CD4-positive, alpha-beta memory T cell (primary cell): ENCODE measurements at regions of chrX and their contacts with region 1.

Region 1: DNA sequence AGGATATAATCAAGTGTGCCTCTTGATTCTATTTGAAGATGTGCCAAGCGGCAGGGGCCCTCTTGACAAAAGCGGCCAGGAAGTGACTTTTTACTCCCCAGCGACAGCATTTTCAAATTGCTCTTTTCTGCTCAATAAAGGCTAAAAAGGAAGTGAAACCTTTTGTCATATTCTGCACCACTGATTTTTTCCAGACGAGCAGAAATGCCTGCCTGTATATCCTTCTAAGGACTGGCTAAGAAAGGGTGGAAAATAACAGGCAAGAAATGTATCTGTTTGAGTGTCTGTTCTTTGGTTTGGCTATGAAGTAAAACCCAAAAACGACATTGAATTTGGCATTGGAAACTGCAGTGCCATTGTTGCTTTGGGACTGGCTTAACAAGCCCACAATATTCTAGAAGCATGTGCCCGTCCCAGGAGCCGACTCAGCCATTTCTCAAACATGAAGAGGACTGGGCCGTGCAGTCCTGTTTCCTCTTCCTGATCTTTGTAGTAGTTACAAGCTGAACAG is 25.4 kb downstream of the TMSB4X start:
- DNase-seq: peak; percentile 55 to 68 (median 59)
- H3K4me3 ChIP-seq: no peak overlapping the region
- H3K4me3 Mint-ChIP-seq: peak overlapping the region; percentile 71 to 88 (median 78)
- H3K27ac ChIP-seq: peak overlapping the region; percentile 72
- H3K27ac Mint-ChIP-seq: peak overlapping the region; percentile 91 to 98 (median 94)
- H3K4me1 ChIP-seq: peaks cover 91% of the 10 kb centered on the region
- H3K4me1 Mint-ChIP-seq: peaks cover 45 to 84% (median 69%) of the 10 kb centered on the region in 4 donors
- H3K27me3 ChIP-seq: no peaks in the 10 kb centered on the region
- H3K27me3 Mint-ChIP-seq: no peaks in the 10 kb centered on the region

Region 2: GRCh38 chrX:12955882-12956703 is 44.3 kb before region 1 on chrX:
- CTCF ChIA-PET with region 1: interaction called, 8 read pairs
- POLR2A ChIA-PET with region 1: interaction called, 39 read pairs
- intact Hi-C with region 1: loop called (anchors 2 kb)
- DNase-seq: peak; percentile 52 to 84 (median 65)
- H3K4me3 ChIP-seq: peak overlapping the region; percentile 23 to 51
- H3K4me3 Mint-ChIP-seq: peak overlapping the region; percentile 80 to 92 (median 86)
- H3K27ac ChIP-seq: peak overlapping the region; percentile 88
- H3K27ac Mint-ChIP-seq: peak overlapping the region; percentile 94 to 99 (median 97)
- H3K4me1 ChIP-seq: peaks cover 96% of the 10 kb centered on the region
- H3K4me1 Mint-ChIP-seq: peaks cover 42 to 90% (median 73%) of the 10 kb centered on the region in 4 donors
- H3K27me3 ChIP-seq: no peaks in the 10 kb centered on the region
- H3K27me3 Mint-ChIP-seq: no peaks in the 10 kb centered on the region

Region 3: GRCh38 chrX:13013363-13014110 is 13.2 kb after region 1 on chrX:
- CTCF ChIA-PET with region 1: interaction called, 7 read pairs
- POLR2A ChIA-PET with region 1: interaction called, 65 read pairs
- intact Hi-C with region 1: loop called (anchors 1 kb)
- DNase-seq: peak in 2 of 5 donors; percentile 19 to 23
- H3K4me3 ChIP-seq: no peak overlapping the region
- H3K4me3 Mint-ChIP-seq: peak overlapping the region; percentile 6 to 44 (median 20)
- H3K27ac ChIP-seq: peak overlapping the region; percentile 61
- H3K27ac Mint-ChIP-seq: peak overlapping the region; percentile 56 to 93 (median 80)
- H3K4me1 ChIP-seq: peaks cover 56% of the 10 kb centered on the region
- H3K4me1 Mint-ChIP-seq: peaks cover 36 to 72% (median 53%) of the 10 kb centered on the region in 4 donors
- H3K27me3 ChIP-seq: no peaks in the 10 kb centered on the region
- H3K27me3 Mint-ChIP-seq: no peaks in the 10 kb centered on the region

Region 4: GRCh38 chrX:13036896-13037295 is 36.5 kb after region 1 on chrX:
- CTCF ChIA-PET with region 1: no interaction called
- POLR2A ChIA-PET with region 1: interaction called, 4 read pairs
- intact Hi-C with region 1: loop called (anchors 5 kb)
- DNase-seq: no peak
- H3K4me3 ChIP-seq: no peak overlapping the region
- H3K4me3 Mint-ChIP-seq: no peak overlapping the region
- H3K27ac ChIP-seq: no peak overlapping the region
- H3K27ac Mint-ChIP-seq: peak overlapping the region in 2 of 7 donors; percentile 11 to 59
- H3K4me1 ChIP-seq: no peaks in the 10 kb centered on the region
- H3K4me1 Mint-ChIP-seq: peaks cover under 1 to 20% (median 4%) of the 10 kb centered on the region in 4 donors
- H3K27me3 ChIP-seq: no peaks in the 10 kb centered on the region
- H3K27me3 Mint-ChIP-seq: no peaks in the 10 kb centered on the region

Region 5: GRCh38 chrX:13051529-13052172 is 51.3 kb after region 1 on chrX:
- CTCF ChIA-PET with region 1: interaction called, 4 read pairs
- POLR2A ChIA-PET with region 1: interaction called, 57 read pairs
- intact Hi-C with region 1: no loop called
- DNase-seq: peak; percentile 61 to 71 (median 70)
- H3K4me3 ChIP-seq: no peak overlapping the region
- H3K4me3 Mint-ChIP-seq: peak overlapping the region in 7 of 8 donors; percentile 10 to 80 (median 52)
- H3K27ac ChIP-seq: peak overlapping the region; percentile 42
- H3K27ac Mint-ChIP-seq: peak overlapping the region; percentile 85 to 97 (median 95)
- H3K4me1 ChIP-seq: peaks cover 88% of the 10 kb centered on the region
- H3K4me1 Mint-ChIP-seq: peaks cover 47 to 87% (median 65%) of the 10 kb centered on the region in 4 donors
- H3K27me3 ChIP-seq: no peaks in the 10 kb centered on the region
- H3K27me3 Mint-ChIP-seq: no peaks in the 10 kb centered on the region

Region 6: GRCh38 chrX:13078739-13079444 is 78.5 kb after region 1 on chrX:
- CTCF ChIA-PET with region 1: interaction called, 6 read pairs
- POLR2A ChIA-PET with region 1: interaction called, 33 read pairs
- intact Hi-C with region 1: no loop called
- DNase-seq: no peak
- H3K4me3 ChIP-seq: peak overlapping the region in 1 of 2 donors; percentile 27
- H3K4me3 Mint-ChIP-seq: peak overlapping the region; percentile 33 to 81 (median 66)
- H3K27ac ChIP-seq: peak overlapping the region; percentile 62
- H3K27ac Mint-ChIP-seq: peak overlapping the region; percentile 84 to 95 (median 93)
- H3K4me1 ChIP-seq: peaks cover 100% of the 10 kb centered on the region
- H3K4me1 Mint-ChIP-seq: peaks cover 57 to 96% (median 77%) of the 10 kb centered on the region in 4 donors
- H3K27me3 ChIP-seq: no peaks in the 10 kb centered on the region
- H3K27me3 Mint-ChIP-seq: no peaks in the 10 kb centered on the region